Kidney (tissue), 22 donors: ENCODE measurements at regions of chr2 and their contacts with region 1.

Region 1: GRCh38 chr2:207473049-207473930 is 56.5 kb upstream of the CREB1 start:
- DNase-seq: peak in 4 of 5 donors; percentile 79 to 95 (median 90)
- H3K4me3 ChIP-seq: peak overlapping the region; percentile 35 to 50 (median 50)
- H3K27ac ChIP-seq: no peak overlapping the region
- H3K4me1 ChIP-seq: peaks cover 0 to 2% (median 0%) of the 10 kb centered on the region in 3 donors
- H3K27me3 ChIP-seq: no peaks in the 10 kb centered on the region
- CTCF ChIP-seq: peak; percentile 77

Region 2: DNA sequence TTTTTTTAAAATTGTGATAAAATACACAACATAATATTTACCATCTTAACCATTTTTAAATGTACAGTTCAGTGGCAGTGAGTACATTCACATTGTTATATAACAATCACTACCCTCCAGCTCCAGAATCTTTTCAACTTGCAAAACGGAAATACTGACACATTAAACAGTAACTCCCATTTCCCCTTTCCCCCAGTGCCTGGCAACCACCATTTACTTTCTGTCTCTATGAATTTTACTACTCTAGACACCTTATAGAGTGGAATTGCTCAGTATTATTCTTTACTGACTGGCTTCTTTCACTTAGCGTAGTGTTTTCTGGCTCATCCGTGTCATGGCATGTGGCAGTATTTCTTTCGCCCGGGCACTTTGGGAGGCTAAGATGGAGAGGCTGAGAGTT is 675.3 kb before region 1 on chr2:
- intact Hi-C with region 1: loop called (anchors 10 kb)
- DNase-seq: no peak
- H3K4me3 ChIP-seq: no peak overlapping the region
- H3K27ac ChIP-seq: no peak overlapping the region
- H3K4me1 ChIP-seq: no peaks in the 10 kb centered on the region
- H3K27me3 ChIP-seq: no peaks in the 10 kb centered on the region
- CTCF ChIP-seq: no peak

Region 3: DNA sequence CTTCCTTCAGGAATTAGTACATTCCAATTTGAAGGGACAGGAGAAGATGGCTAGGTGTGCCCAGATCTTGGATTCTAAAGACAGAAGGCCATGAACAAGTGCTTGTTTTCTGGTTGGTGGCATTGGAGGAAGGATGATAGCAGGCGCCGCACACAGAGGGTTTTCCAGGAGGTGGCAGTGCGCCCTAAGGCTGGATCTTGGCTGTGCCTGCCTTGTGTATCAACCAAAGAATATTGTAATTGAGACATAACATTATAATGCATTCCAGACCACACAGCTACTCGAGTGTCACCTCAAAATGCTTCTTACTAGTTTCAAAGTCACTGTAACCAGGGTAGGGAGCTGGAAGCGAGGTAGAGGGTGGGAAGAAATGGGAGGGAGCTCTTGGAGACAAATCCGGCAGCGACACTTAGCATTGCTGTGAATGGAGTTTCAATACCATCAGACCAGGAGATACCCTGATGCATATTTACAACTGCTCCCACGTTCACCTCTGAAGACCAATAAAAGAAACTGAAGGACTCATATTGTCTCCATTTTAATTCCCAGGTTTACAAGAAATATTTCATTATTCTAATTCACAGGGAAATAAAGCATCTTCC is 491.4 kb before region 1 on chr2:
- intact Hi-C with region 1: loop called (anchors 10 kb)
- DNase-seq: peak; percentile 81 to 89 (median 82)
- H3K4me3 ChIP-seq: peak overlapping the region in 1 of 3 donors; percentile 9
- H3K27ac ChIP-seq: peak overlapping the region in 1 of 2 donors; percentile 29
- H3K4me1 ChIP-seq: peaks cover 0 to 2% (median 0%) of the 10 kb centered on the region in 3 donors
- H3K27me3 ChIP-seq: no peaks in the 10 kb centered on the region
- CTCF ChIP-seq: peak; percentile 82

Region 4: DNA sequence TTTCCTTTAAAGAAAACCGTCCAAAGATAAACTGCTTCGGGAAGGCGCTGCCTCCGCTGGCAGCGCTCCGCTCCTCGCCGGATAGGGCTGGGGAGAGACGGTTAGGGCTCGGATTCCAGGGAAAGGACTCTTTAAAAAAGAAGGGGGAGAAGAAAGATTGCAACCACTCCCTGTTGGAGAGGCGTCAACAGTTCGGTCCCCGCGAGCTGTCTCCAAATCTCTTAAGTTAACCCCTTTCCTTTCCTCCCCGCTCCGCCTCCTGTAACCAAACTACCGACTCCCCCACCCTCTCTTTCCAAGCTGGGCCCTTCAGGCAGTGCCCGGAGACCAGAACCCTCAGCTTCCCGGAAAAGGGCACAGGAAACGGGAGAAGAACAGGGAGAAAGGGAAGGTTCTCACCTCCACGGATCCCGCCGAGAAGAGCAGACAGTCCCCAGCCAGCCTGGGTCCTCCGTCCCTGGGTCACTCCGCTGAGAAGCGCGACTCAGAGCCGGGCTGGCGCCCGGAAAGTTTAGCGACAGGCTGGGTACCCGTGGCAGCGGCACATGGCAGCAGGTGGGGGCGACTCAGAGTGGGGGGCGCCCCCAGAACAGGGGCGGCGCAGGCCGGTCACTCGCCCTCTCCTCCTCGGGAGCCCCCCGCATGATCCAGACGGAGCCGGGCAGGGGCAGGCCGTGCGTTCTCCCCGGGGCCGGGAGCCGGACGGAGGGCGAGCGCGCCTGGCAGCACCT is 295.7 kb after region 1 on chr2:
- intact Hi-C with region 1: no loop called
- DNase-seq: peak in 4 of 5 donors; percentile 37 to 90 (median 54)
- H3K4me3 ChIP-seq: peak overlapping the region; percentile 49 to 85 (median 76)
- H3K27ac ChIP-seq: peak overlapping the region; percentile 79 to 89
- H3K4me1 ChIP-seq: peaks cover 0 to 11% (median 5%) of the 10 kb centered on the region in 3 donors
- H3K27me3 ChIP-seq: peaks cover 2% of the 10 kb centered on the region
- CTCF ChIP-seq: no peak